Tibial artery (tissue), 4 donors: ENCODE measurements at regions of chr2 and their contacts with region 1.

Region 1: DNA sequence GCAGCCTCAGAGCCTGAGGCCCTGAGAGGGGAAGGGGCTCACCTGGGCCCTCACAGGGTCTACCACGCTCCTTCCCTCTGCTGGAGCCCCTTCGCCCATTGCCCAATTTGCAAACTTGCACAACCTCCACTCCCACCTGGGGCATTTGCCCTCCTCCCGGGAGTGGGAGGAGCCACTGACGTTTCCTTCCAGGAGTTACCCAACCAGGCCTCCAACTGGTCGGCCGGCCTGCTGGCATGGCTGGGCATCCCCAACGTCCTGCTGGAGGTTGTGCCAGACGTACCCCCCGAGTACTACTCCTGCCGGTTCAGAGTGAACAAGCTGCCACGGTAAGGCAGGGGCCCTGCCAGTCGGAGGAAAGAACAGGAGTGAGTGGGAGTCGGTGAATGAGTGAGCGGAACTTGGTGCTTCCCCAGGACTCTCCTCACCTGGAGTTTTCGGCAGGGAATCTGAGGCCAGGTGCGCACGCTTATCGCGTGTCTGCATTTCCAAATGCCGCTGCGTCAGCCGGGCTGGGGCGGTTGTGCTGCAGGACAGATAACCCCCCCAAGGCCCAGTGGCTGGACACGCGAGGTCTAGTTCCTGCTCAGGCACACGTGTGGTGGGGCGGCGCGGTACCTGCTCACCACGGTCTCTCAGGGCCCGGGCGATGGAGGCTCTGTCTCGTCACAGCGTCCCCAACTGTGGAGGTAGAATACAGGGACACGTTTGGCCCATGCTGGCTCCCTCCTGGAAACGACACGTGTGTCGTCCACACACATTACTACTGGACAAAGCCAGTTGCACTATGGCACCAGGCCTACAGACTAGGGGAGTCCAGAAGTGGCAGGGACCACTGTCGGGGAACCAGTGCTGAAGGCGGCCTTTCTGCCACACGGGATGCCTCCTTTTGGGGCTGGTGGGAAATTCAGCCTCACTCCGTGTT is 11.7 kb downstream of the ANO7 start:
- DNase-seq: no peak
- H3K4me3 ChIP-seq: no peak overlapping the region
- H3K27ac ChIP-seq: no peak overlapping the region
- H3K4me1 ChIP-seq: no peaks in the 10 kb centered on the region
- H3K27me3 ChIP-seq: no peaks in the 10 kb centered on the region
- CTCF ChIP-seq: no peak

Region 2: DNA sequence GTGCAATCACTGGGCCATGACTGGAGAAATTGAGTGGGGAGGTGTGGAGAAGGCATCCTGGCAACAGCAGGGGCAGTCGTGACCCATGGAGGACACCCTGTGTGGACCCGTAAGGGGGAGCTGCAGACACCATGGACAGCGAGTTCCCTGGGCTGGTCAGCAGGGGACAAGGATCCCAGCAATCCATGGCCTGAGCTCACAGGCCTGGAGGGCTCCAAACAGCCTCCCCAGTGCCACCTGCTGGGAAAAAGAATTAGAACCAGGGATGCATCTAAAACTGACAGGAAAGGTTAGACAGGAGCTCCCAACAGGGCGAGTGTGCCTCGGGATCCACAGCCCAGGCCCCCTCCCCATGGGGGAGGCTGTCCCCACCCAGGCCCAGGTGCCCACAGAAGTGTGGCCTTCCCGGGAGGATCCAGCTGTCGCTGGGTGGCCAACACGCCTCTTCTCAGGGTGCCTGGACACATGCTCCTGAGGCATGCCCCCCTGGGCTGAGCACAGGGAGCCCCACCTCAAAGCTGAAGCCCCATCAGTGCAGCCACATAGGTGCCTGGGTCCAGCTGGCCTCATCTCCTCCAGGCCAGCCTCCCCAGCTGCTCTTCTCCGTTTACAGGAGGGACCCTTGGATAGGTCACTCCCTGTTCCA is 359.6 kb before region 1 on chr2:
- intact Hi-C with region 1: loop called (anchors 10 kb)
- DNase-seq: no peak
- H3K4me3 ChIP-seq: no peak overlapping the region
- H3K27ac ChIP-seq: no peak overlapping the region
- H3K4me1 ChIP-seq: no peaks in the 10 kb centered on the region
- H3K27me3 ChIP-seq: peaks cover 0 to 43% of the 10 kb centered on the region in 2 donors
- CTCF ChIP-seq: peak; percentile 36 to 40

Region 3: DNA sequence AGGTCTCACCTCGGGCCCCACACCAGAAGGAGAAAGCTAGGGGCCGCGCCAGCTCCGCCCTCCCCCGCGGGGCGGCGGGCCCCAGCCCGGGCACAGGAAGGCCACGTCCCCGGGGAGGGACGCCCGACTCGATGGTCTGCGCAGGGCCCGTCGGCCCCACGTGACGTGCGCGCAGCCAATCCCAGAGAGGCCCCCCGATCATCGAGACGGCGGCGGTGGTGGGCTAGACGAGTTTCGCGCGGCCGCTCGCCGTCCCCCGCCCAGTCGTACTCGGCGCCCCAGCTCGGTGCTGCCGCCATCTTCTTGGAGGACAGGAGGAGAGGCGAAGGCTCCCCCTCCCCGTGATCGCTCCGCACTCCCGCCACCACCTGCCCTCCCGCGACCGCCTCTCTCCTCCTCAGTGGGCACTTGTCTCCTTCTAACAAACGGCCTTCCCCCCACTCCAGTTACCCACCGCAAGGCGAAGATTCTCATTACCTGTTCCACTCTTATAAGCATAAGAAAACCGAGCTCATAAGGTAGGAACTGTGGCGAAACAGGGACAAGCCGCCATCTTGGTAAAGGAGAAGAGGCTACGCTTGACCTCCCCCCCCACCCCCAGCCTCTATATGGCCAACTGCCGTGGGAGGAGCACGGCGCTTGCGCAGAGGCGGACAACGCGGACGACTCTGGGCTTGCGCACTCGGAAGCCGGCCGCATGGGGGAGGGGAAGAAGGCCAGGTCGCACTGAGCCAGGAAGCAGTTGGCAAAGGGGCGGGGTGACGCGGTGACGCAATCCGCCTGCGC is 115.1 kb after region 1 on chr2 and contains the start of gene HDLBP:
- intact Hi-C with region 1: no loop called
- DNase-seq: peak; percentile 99 to 100
- H3K4me3 ChIP-seq: peak within 1 kb of the TSS; percentile 96 to 99
- H3K27ac ChIP-seq: peak within 1 kb of the TSS; percentile 91 to 99
- H3K4me1 ChIP-seq: peaks cover 0 to 70% (median 44%) of the 10 kb centered on the region in 4 donors
- H3K27me3 ChIP-seq: no peaks in the 10 kb centered on the region
- CTCF ChIP-seq: peak; percentile 24 to 29